ENCODE measurements at regions of chr11 and their contacts with region 1.

Region 1: GRCh38 chr11:117426269-117426685 is 98.6 kb downstream of the CEP164 start:
- DNase-seq: peak; percentile 86
- CTCF ChIP-seq: peak; percentile 96

Region 2: GRCh38 chr11:117134431-117134830 is 291.8 kb before region 1 on chr11:
- in situ Hi-C with region 1: no loop called
- DNase-seq: no peak
- CTCF ChIP-seq: no peak

Region 3: GRCh38 chr11:117634756-117635603 is 208.7 kb after region 1 on chr11:
- in situ Hi-C with region 1: no loop called
- DNase-seq: no peak
- CTCF ChIP-seq: no peak

Region 4: GRCh38 chr11:117807482-117808327 is 381.4 kb after region 1 on chr11:
- in situ Hi-C with region 1: loop called (anchors 10 kb)
- DNase-seq: peak; percentile 83
- CTCF ChIP-seq: peak; percentile 87